ENCODE measurements at regions of chrX and their contacts with region 1.

Region 1: GRCh38 chrX:16882702-16883486 is 12.7 kb upstream of the RBBP7 start:
- DNase-seq: peak; percentile 38 to 75 (median 53)
- ATAC-seq: peak; percentile 70 to 86 (median 78)
- H3K4me3 ChIP-seq: peak overlapping the region in 11 of 12 donors; percentile 32 to 61 (median 49)
- H3K27ac ChIP-seq: peak overlapping the region in 11 of 12 donors; percentile 4 to 74 (median 54)
- H3K4me1 ChIP-seq: peaks cover 0 to 6% (median 0%) of the 10 kb centered on the region in 12 donors
- H3K27me3 ChIP-seq: peaks cover 0 to 71% (median 0%) of the 10 kb centered on the region in 9 donors
- CTCF ChIP-seq: peak in 10 of 12 donors; percentile 30 to 65 (median 56)
- POLR2A ChIP-seq: no peak

Region 2: DNA sequence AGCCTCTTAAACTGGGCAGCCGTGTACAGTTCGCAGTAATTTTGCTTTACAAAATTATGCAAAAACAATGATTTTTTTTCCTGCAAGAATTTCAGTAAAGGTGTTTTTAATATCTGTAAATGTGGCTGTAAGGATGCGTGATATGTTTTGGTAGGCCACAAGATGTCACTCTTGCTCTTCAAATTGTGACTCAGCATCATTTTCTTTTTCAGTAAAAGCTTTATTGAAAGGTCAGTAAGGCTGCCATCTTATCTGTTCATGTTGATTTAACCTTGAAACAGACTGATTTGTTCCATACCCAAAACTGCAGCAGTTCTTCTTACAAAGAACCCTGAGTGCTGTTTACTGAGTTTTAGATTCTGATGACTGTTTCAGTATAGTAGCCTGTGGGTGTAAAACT is 56.7 kb before region 1 on chrX:
- intact Hi-C with region 1: loop called in 4 of 10 experiments (anchors 5 to 10 kb)
- DNase-seq: no peak
- ATAC-seq: peak in 2 of 4 donors; percentile 35 to 39
- H3K4me3 ChIP-seq: no peak overlapping the region
- H3K27ac ChIP-seq: no peak overlapping the region
- H3K4me1 ChIP-seq: peaks cover 0 to 12% (median 2%) of the 10 kb centered on the region in 12 donors
- H3K27me3 ChIP-seq: no peaks in the 10 kb centered on the region
- CTCF ChIP-seq: peak in 11 of 12 donors; percentile 32 to 63 (median 50)
- POLR2A ChIP-seq: no peak

Region 3: GRCh38 chrX:16836371-16836770 is 46.5 kb before region 1 on chrX:
- intact Hi-C with region 1: loop called in 4 of 10 experiments (anchors 5 to 10 kb)
- DNase-seq: no peak
- ATAC-seq: peak in 2 of 4 donors; percentile 33 to 43
- H3K4me3 ChIP-seq: no peak overlapping the region
- H3K27ac ChIP-seq: no peak overlapping the region
- H3K4me1 ChIP-seq: peaks cover 0 to 14% (median 7%) of the 10 kb centered on the region in 12 donors
- H3K27me3 ChIP-seq: no peaks in the 10 kb centered on the region
- CTCF ChIP-seq: peak in 6 of 12 donors; percentile 9 to 35 (median 22)
- POLR2A ChIP-seq: no peak

Region 4: DNA sequence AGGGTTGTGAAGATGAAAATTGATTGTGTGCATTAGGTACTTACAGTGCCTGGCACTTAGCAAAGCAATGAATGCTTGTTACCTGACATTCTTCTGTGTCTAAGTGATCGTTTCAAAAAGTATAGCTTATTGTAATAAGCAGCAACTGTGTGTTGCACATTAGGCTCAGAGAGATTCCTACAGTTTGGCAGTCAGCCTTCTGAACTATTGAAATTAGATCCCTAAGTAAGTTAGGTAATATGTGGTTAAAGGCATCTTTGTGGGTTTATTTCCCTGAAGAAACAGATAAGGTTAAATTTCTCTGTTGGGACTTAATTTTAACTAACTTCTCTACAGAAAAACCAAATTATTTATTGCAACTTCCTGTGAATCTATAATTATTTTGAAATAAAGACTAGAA is 156.9 kb after region 1 on chrX:
- intact Hi-C with region 1: loop called in 6 of 10 experiments (anchors 5 to 10 kb)
- DNase-seq: no peak
- ATAC-seq: no peak
- H3K4me3 ChIP-seq: no peak overlapping the region
- H3K27ac ChIP-seq: no peak overlapping the region
- H3K4me1 ChIP-seq: peaks cover 0 to 12% (median 0%) of the 10 kb centered on the region in 12 donors
- H3K27me3 ChIP-seq: peaks cover 0 to 27% (median 0%) of the 10 kb centered on the region in 9 donors
- CTCF ChIP-seq: no peak
- POLR2A ChIP-seq: no peak

Region 5: DNA sequence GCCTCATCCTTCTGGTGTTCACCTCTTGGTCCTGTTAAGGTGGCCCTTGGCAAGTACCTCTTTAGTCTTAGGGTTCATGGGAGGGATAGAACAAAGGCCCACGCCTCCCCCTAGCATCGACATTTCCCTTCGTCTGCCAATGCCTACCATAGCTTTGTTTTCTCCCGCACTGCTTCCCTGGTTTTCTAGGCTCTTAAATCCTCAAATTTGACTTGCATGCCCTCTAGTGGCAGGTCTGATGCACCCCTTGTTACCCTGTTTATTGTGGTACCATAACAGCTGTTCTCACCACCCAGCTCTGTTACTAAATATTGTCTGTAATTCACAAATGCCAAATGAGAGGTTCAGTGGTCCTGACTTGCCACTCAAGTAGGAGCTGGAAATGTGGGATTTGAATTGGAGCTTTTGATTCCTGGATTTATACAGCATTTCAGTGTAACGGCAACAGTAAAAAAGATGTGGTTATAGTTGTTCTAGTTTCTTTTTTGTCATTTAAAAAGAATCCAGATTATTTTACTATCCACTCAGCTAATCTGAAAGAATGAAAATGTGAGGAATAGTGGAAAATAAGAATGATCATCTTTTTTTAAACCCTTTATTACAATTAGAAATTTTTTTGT is 163.7 kb after region 1 on chrX:
- intact Hi-C with region 1: loop called (anchors 1 to 10 kb)
- DNase-seq: peak in 4 of 5 donors; percentile 30 to 45 (median 44)
- ATAC-seq: peak; percentile 73 to 83 (median 78)
- H3K4me3 ChIP-seq: no peak overlapping the region
- H3K27ac ChIP-seq: no peak overlapping the region
- H3K4me1 ChIP-seq: no peaks in the 10 kb centered on the region
- H3K27me3 ChIP-seq: peaks cover 0 to 6% (median 0%) of the 10 kb centered on the region in 9 donors
- CTCF ChIP-seq: peak; percentile 55 to 73 (median 66)
- POLR2A ChIP-seq: no peak

Measured in heart left ventricle (tissue), 16 donors.